Activated T-helper 2 cell treated with anti-CD3 and anti-CD28 coated beads, Interferon-gamma antibody, Interleukin-2, Interleukin-4, amounts not matched to agents 10 μg/mL and 5 μg/mL and 100 μg/mL, durations not matched to agents 14 hours and 24 hours and 36 hours (primary cell): ENCODE measurements at regions of chr1 and their contacts with region 1.

Region 1: DNA sequence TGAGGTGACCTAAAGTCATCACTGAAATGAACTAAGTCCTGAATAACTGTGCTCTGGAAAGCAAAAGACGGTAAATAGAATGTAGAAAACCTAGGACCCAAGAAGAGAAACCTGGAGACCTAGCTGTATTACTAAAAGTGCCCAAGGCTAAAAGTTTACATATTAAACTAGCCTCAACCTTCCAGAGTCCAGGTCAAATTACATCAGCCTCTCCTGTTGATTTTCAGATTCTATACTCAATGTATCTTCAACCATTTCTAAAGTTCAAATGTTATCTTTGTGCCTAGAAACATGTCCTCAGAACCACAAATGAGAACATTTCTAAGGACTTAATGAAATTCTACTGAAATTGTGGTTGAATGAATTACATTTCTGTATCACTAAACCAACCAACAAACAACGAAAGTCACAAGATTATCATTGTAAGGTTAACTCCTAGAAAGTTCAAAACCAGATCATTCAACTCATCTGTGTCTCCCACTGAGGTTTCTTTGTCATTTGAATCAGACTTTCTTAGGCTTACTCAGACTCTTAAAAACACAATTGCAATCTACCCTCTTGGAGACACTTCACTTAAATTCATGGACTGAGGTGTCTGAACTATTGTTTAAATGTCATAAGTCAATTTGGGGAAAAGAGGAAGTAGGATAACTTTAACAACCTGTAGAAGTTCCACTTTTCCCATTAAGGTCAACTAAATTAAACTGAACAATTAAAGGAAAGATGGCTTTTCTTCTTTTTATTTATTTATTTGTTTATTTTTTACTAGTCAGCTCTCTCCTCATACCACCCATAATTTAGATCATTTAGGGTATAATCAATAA is 207.7 kb downstream of the BARHL2 start:
- DNase-seq: no peak
- H3K4me3 Mint-ChIP-seq: no peak overlapping the region
- H3K27ac Mint-ChIP-seq: peak overlapping the region; percentile 67
- H3K4me1 Mint-ChIP-seq: peaks cover 21% of the 10 kb centered on the region
- H3K27me3 Mint-ChIP-seq: peaks cover 11% of the 10 kb centered on the region

Region 2: DNA sequence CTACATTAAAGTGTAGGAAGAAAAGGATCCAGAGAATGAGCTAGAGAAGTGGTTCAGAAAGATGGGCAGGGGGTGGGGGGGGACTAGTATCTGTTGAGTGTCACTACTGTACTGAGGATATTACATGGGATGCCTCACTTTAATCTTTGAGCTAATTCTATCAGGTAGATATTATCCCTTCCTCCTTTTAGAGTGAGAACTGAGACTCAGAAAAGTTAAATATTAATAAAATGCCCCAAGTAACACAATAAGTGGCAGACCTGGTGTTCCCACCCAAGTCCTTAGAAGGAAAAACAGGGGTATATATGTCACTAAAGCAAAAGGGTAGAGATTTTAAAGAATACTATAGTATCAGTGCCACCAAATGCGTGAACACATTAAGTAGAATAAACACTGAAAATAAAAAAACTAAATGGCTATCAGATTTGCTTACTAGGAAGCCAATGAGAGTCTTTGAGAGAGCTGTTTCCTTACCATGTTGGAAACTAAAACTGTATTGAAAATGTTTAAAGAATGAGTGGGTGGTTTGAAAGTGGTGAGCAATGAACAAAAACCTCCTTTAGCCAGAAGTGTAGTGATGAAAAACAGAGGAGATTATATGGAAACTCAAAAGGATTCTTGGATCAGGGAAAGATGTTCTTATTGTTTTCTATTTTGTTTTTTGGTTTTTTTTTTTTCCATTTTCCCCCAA is 23.2 kb before region 1 on chr1:
- intact Hi-C with region 1: loop called (anchors 2 kb)
- DNase-seq: no peak
- H3K4me3 Mint-ChIP-seq: no peak overlapping the region
- H3K27ac Mint-ChIP-seq: no peak overlapping the region
- H3K4me1 Mint-ChIP-seq: no peaks in the 10 kb centered on the region
- H3K27me3 Mint-ChIP-seq: peaks cover 3% of the 10 kb centered on the region

Region 3: GRCh38 chr1:90558126-90558525 is 48.7 kb after region 1 on chr1:
- intact Hi-C with region 1: loop called (anchors 1 kb)
- DNase-seq: no peak
- H3K4me3 Mint-ChIP-seq: no peak overlapping the region
- H3K27ac Mint-ChIP-seq: no peak overlapping the region
- H3K4me1 Mint-ChIP-seq: peaks cover 18% of the 10 kb centered on the region
- H3K27me3 Mint-ChIP-seq: peaks cover 25% of the 10 kb centered on the region